Prostate gland (tissue), 2 donors: ENCODE measurements at regions of chr3 and their contacts with region 1.

Region 1: DNA sequence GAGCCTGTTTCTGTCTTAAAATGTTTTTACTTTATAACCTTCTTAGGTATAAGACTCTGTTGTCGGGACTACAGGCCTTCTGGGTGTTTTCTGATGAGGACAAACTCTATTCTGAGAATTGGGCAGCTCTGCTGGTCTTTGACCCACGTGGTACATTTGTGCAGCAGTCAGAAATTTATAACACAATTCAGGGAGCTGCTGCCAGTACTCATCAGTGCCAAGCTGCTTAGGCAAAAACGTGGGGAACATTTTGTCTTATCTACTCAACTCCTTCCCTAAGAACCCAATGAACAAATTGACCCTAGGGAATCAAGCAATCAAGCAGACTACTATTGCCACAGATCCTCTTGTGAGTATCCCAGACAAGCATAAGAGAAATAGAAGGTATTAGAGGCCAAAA is 180.7 kb upstream of the PDZRN3 start:
- DNase-seq: peak; percentile 48
- H3K4me3 ChIP-seq: no peak overlapping the region
- H3K27ac ChIP-seq: peak overlapping the region; percentile 57 to 63
- H3K4me1 ChIP-seq: no peaks in the 10 kb centered on the region
- H3K27me3 ChIP-seq: no peaks in the 10 kb centered on the region
- CTCF ChIP-seq: no peak
- POLR2A ChIP-seq: no peak

Region 2: DNA sequence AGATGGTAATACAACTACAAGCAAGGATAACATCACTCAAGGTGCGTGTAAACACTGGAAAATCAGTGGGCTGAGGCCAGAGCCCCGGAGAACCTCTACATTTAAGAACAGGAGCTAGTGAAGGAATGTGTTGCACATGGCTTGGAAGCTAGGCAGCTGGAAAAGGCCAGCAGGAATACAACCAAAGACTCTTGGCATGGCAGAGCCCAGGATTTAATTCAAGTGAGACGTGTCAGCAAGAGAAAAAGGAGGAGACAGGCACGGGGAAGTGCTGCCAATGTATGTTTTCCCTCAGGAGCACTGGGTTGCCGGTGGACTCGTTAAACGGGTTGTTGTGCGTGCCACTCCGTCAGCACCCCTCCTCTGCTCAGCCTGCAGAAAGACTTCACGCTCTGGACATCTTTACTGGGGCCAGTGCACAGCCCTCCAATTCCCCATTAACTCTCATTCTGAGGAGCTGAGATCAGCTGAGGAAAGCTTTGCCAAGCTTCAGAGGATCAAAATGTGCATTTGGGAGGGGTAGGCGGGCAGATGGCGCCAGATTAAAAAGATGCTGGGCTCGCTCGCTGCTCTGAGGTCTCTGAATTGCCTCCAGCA is 284.5 kb before region 1 on chr3:
- intact Hi-C with region 1: loop called (anchors 5 kb)
- DNase-seq: peak; percentile 92
- H3K4me3 ChIP-seq: peak overlapping the region; percentile 18 to 22
- H3K27ac ChIP-seq: peak overlapping the region; percentile 81 to 90
- H3K4me1 ChIP-seq: peaks cover 34% of the 10 kb centered on the region
- H3K27me3 ChIP-seq: no peaks in the 10 kb centered on the region
- CTCF ChIP-seq: peak in 1 of 4 experiments; percentile 7
- POLR2A ChIP-seq: no peak

Region 3: DNA sequence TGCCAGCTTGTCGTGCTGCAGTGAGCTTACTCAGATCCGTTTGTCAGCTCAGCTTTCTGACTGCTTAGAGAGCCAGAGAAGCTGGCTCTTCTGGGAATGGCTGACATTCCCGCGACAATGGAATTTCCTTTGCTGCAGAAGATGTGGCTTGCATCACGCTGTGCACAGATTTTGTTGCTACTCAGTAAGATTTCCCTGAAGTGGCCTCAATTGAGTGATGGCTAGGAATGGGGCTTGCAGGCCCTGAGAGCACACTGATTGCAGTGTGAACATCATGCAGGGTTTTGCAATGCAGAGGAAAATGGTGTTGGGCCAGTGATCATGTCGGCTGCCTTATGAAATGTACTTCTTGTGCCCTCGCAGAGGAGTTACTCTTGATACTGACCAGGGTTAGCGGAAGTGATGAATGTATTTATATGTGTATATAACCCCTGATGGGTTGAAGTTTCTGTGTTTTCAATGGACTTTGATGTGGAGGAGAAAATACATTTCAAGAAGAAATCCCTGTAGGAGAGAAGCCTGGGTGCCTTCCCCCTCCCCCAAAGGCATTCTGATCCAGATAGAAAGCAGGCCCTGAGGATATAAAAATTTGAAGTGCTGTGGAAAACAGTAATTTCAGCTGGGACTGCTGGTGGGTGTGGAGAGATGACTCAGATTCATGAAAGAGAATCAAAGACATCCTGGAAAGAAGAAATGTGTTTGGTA is 78.2 kb before region 1 on chr3:
- intact Hi-C with region 1: no loop called
- DNase-seq: no peak
- H3K4me3 ChIP-seq: no peak overlapping the region
- H3K27ac ChIP-seq: no peak overlapping the region
- H3K4me1 ChIP-seq: no peaks in the 10 kb centered on the region
- H3K27me3 ChIP-seq: no peaks in the 10 kb centered on the region
- CTCF ChIP-seq: no peak
- POLR2A ChIP-seq: no peak

Region 4: DNA sequence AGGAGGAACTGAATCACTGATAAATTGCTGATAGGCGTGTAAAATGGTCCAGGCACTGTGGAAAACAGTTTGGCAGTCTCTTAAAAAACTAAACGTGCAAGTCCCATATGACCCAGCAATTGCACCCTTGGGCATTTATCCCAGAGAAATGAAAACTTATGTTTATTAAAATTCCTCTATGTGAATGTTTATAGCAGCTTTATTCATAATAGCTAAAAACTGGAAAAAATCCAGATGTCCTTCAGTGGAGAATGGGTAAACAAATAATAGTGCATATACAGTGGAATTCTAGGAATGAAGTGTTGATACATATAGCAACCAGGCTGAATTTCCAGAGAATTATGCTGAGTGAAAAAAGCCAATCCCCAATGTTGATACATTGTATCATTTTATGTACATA is 301.5 kb after region 1 on chr3:
- intact Hi-C with region 1: no loop called
- DNase-seq: no peak
- H3K4me3 ChIP-seq: no peak overlapping the region
- H3K27ac ChIP-seq: no peak overlapping the region
- H3K4me1 ChIP-seq: no peaks in the 10 kb centered on the region
- H3K27me3 ChIP-seq: no peaks in the 10 kb centered on the region
- CTCF ChIP-seq: no peak
- POLR2A ChIP-seq: no peak